ENCODE measurements at regions of chr12 and their contacts with region 1.

Region 1: DNA sequence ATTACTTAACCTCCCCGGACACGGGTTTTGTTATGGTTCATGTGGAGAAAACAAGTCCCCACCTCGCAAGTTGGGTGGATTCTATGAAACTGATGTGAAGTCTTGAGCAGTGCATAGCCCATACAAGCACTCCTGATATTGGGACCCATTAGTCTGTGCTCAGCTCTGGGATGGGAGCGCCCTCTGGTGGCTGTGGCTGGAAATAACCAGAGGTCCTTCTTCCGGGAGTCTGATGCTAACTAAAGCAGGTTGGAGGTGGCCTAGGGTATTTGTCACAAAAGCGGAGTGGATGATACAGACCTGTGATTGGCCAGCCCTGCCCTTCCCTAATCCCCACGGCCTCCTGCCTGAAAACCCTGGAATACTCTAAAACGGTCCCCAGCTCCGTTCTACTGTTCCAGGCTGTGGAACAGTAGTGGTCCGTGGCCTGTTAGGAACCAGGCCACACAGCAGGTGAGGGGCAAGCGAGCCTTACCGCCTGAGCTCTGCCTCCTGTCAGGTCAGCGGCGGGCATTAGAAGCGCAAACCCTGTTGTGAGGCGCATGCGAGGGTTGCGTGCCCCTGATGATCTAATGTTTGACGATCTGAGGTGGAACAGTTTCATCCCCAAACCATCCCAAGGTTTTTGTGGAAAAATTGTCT is 6.4 kb downstream of the SLC48A1 start:
- DNase-seq: peak; percentile 76 to 87
- H3K4me3 ChIP-seq: no peak overlapping the region
- H3K27ac ChIP-seq: no peak overlapping the region
- H3K4me1 ChIP-seq: peaks cover 62% of the 10 kb centered on the region
- H3K27me3 ChIP-seq: no peaks in the 10 kb centered on the region
- CTCF ChIP-seq: peak; percentile 96

Region 2: GRCh38 chr12:47591361-47591791 is 188.0 kb before region 1 on chr12:
- CTCF ChIA-PET with region 1: no interaction called
- POLR2A ChIA-PET with region 1: no interaction called
- intact Hi-C with region 1: no loop called
- DNase-seq: no peak
- H3K4me3 ChIP-seq: no peak overlapping the region
- H3K27ac ChIP-seq: no peak overlapping the region
- H3K4me1 ChIP-seq: no peaks in the 10 kb centered on the region
- H3K27me3 ChIP-seq: no peaks in the 10 kb centered on the region
- CTCF ChIP-seq: no peak

Region 3: DNA sequence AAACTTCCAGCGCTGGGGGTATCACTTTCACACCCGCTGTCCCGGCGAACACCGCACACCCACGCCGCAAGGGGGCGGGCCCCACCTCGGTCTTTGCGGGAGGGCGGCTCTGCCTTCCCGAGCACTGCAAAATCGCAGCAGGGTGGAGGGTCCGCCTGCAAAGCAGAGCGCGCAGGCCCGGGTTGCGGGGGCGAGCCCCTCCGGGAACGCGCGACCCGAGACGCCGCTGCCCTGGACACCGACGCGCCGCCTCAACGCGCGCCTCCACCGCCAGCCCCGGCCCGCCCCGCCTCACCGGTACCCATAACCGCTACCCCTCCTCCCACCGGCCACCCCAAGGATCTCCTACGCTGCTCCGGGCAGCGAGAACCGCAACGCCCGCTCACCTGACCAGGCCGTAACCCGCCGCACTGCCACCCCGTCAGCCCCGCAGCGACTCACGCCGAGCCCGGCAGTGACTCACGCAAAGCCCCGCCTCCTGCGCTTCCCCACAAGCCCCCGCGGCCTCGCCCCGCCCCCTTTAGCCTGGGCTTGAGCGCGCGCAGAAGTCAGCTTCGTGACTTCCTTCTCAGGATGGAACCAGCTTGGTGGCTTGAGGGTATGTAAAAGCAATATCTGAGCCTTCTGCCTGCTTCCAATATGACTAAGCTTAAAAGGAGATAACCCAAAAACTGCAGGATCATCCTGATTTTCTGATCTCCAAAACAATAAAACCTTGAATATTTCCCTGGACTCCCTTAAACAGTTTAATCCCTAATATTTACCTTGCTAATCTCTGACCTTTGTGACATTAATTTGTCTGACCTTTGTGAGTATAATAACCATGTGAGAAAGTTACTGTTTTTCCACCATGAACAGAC is 73.6 kb before region 1 on chr12 and contains the start of gene RPAP3:
- CTCF ChIA-PET with region 1: no interaction called
- POLR2A ChIA-PET with region 1: interaction called, 24 read pairs
- intact Hi-C with region 1: no loop called
- DNase-seq: peak; percentile 91 to 95
- H3K4me3 ChIP-seq: peak within 1 kb of the TSS; percentile 63
- H3K27ac ChIP-seq: peak within 1 kb of the TSS; percentile 79
- H3K4me1 ChIP-seq: peaks cover 19% of the 10 kb centered on the region
- H3K27me3 ChIP-seq: no peaks in the 10 kb centered on the region
- CTCF ChIP-seq: peak; percentile 71
- total RNA-seq, gene RPAP3: 31.6 and 37.0 TPM in 2 replicates

Region 4: GRCh38 chr12:47742253-47742825 is 37.1 kb before region 1 on chr12:
- CTCF ChIA-PET with region 1: interaction called, 19 read pairs
- POLR2A ChIA-PET with region 1: interaction called, 5 read pairs
- intact Hi-C with region 1: loop called (anchors 1 kb)
- DNase-seq: peak in 1 of 2 experiments; percentile 66
- H3K4me3 ChIP-seq: no peak overlapping the region
- H3K27ac ChIP-seq: no peak overlapping the region
- H3K4me1 ChIP-seq: peaks cover 8% of the 10 kb centered on the region
- H3K27me3 ChIP-seq: no peaks in the 10 kb centered on the region
- CTCF ChIP-seq: peak; percentile 100

Region 5: GRCh38 chr12:47767216-47767724 is 12.2 kb before region 1 on chr12:
- CTCF ChIA-PET with region 1: interaction called, 5 read pairs
- POLR2A ChIA-PET with region 1: interaction called, 9 read pairs
- intact Hi-C with region 1: loop called (anchors 1 kb)
- DNase-seq: peak in 1 of 2 experiments; percentile 55
- H3K4me3 ChIP-seq: no peak overlapping the region
- H3K27ac ChIP-seq: no peak overlapping the region
- H3K4me1 ChIP-seq: peaks cover 70% of the 10 kb centered on the region
- H3K27me3 ChIP-seq: no peaks in the 10 kb centered on the region
- CTCF ChIP-seq: peak; percentile 72

Region 6: GRCh38 chr12:48618541-48618940 is 839.1 kb after region 1 on chr12:
- CTCF ChIA-PET with region 1: no interaction called
- POLR2A ChIA-PET with region 1: no interaction called
- intact Hi-C with region 1: loop called (anchors 5 kb)
- DNase-seq: peak; percentile 63 to 69
- H3K4me3 ChIP-seq: no peak overlapping the region
- H3K27ac ChIP-seq: no peak overlapping the region
- H3K4me1 ChIP-seq: no peaks in the 10 kb centered on the region
- H3K27me3 ChIP-seq: peaks cover 27% of the 10 kb centered on the region
- CTCF ChIP-seq: peak; percentile 97